ENCODE measurements at regions of chr1 and their contacts with region 1.

Region 1: GRCh38 chr1:247373721-247374141 is 42.1 kb upstream of the ZNF496 start:
- DNase-seq: peak; percentile 74
- H3K4me3 Mint-ChIP-seq: no peak overlapping the region
- H3K27ac Mint-ChIP-seq: no peak overlapping the region
- H3K4me1 Mint-ChIP-seq: peaks cover 3% of the 10 kb centered on the region
- H3K27me3 Mint-ChIP-seq: peaks cover 6% of the 10 kb centered on the region

Region 2: GRCh38 chr1:246907472-246907871 is 466.3 kb before region 1 on chr1:
- CTCF ChIA-PET with region 1: no interaction called
- intact Hi-C with region 1: loop called (anchors 5 kb)
- DNase-seq: peak; percentile 32
- H3K4me3 Mint-ChIP-seq: no peak overlapping the region
- H3K27ac Mint-ChIP-seq: no peak overlapping the region
- H3K4me1 Mint-ChIP-seq: peaks cover 2% of the 10 kb centered on the region
- H3K27me3 Mint-ChIP-seq: no peaks in the 10 kb centered on the region

Region 3: DNA sequence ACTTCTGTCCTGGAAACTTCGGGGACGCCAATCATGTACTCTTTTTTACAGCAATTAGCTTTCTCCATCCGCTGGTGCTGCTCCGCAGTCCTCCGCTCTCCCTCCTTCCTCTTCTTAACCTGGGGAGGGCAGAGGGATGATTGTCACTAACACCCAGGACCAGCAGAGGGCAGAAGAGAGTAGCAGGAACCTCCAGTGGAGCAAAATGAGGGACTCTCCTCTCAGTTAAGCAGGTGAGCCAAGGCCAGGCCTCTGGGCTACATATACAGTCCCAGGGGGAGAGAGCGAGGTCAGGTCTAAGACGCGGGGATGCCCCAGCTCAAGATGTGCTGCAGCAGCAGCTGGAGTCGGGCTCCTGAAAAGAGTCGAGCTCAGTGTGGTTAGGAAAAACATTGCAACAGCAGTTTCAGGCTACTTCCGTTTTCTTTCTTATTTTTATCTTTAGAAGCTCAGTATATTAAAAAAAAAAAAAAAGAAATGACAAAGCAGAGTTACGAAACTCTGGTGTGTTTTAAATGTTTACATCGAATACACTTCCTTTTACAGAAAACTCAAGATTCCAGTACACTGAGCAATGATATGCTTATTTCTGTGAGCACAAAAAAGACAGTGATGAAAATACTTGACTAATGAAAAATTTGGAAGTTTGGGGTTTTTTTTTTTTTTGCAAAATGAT is 16.5 kb after region 1 on chr1:
- CTCF ChIA-PET with region 1: interaction called, 27 read pairs
- intact Hi-C with region 1: loop called (anchors 1 kb)
- DNase-seq: peak; percentile 91
- H3K4me3 Mint-ChIP-seq: no peak overlapping the region
- H3K27ac Mint-ChIP-seq: no peak overlapping the region
- H3K4me1 Mint-ChIP-seq: peaks cover 17% of the 10 kb centered on the region
- H3K27me3 Mint-ChIP-seq: peaks cover 7% of the 10 kb centered on the region

Region 4: DNA sequence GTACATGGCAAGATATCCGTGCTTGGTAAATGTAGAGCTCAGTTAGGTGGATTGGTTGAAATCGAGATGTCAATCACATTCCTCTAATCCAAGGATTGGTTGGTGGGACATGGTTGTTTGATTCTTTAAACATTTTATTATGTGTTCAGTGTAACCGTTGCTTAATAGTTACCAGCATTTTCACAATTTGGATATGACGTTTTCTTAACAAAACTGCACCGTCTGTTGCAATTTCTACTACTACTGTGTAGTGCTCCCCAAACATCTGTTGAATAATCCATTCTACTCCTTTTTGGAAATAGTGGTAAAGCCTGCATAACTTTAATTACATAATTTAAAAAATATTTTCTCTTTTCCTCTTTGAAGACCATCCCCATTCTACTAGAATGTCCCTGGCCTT is 67.9 kb after region 1 on chr1:
- CTCF ChIA-PET with region 1: no interaction called
- intact Hi-C with region 1: no loop called
- DNase-seq: no peak
- H3K4me3 Mint-ChIP-seq: no peak overlapping the region
- H3K27ac Mint-ChIP-seq: no peak overlapping the region
- H3K4me1 Mint-ChIP-seq: no peaks in the 10 kb centered on the region
- H3K27me3 Mint-ChIP-seq: no peaks in the 10 kb centered on the region

Region 5: DNA sequence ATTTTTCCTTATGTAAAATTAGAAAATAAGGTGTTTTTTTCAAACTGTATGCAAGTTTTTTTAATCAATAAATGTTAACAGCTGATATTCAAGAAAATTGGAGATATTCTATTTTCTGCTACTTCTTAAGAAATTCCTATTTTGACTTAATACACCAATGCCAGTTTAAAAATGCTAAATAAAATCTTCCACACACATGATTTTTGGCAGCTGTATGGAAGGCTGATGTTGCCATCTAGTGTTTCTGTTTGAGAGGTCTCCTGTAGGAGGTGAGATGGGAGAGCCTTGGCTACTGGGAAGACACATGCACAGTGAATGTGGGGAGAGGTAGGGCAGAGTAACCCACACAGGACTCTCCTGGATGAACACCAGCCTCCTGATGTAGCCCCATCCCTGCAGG is 113.3 kb after region 1 on chr1:
- CTCF ChIA-PET with region 1: interaction called, 80 read pairs
- intact Hi-C with region 1: loop called (anchors 1 kb)
- DNase-seq: peak; percentile 37
- H3K4me3 Mint-ChIP-seq: no peak overlapping the region
- H3K27ac Mint-ChIP-seq: no peak overlapping the region
- H3K4me1 Mint-ChIP-seq: no peaks in the 10 kb centered on the region
- H3K27me3 Mint-ChIP-seq: peaks cover 5% of the 10 kb centered on the region

Region 6: DNA sequence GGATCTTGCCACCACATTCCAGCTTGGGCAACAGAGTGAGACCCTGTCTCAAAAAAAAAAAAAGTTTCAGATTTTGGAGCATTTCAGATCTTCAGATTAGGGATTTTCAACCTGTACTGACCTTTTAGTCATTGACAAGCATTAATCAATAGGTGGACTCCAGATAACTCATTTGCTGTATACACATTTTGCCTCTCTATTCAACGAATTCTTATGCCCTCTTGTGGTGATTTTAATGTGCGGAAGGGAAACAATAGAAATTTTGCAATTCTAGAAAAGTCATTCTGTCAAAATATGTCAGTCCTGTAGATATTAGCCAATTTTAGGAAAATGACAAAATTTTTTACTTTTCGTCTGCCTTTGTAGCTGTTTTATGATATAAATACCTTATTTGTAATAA is 202.8 kb after region 1 on chr1:
- CTCF ChIA-PET with region 1: interaction called, 10 read pairs
- intact Hi-C with region 1: loop called (anchors 1 kb)
- DNase-seq: no peak
- H3K4me3 Mint-ChIP-seq: no peak overlapping the region
- H3K27ac Mint-ChIP-seq: no peak overlapping the region
- H3K4me1 Mint-ChIP-seq: no peaks in the 10 kb centered on the region
- H3K27me3 Mint-ChIP-seq: peaks cover 17% of the 10 kb centered on the region

Region 7: GRCh38 chr1:247948558-247948957 is 574.8 kb after region 1 on chr1 and contains the start of gene OR2L8:
- CTCF ChIA-PET with region 1: no interaction called
- intact Hi-C with region 1: no loop called
- DNase-seq: no peak
- H3K4me3 Mint-ChIP-seq: no peak within 1 kb of the TSS
- H3K27ac Mint-ChIP-seq: no peak within 1 kb of the TSS
- H3K4me1 Mint-ChIP-seq: no peaks in the 10 kb centered on the region
- H3K27me3 Mint-ChIP-seq: no peaks in the 10 kb centered on the region
- total RNA-seq, gene OR2L8: 0.21 TPM in 1 of 2 experiments, not detected in the other